ENCODE measurements at regions of chr1 and their contacts with region 1.

Region 1: DNA sequence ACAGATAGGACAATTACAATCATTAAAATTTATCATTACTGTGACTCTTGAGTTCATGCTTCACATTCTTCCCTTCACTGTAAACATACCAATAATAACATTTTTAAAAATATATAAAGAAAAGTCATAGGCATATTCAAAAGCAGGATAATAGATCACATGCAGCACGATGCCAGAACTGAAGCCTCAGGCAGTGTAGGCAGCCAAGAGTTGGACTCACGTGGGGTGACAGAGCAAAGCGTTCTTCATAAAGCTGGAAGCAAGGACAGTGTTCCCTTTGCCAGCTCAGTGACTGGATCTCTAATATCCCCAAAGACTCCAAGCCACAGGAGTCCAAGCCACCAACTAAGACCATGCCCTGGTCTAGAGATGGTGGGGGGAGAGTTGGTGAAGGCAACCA is 77.7 kb downstream of the ODF2L start:
- DNase-seq: no peak
- H3K4me3 ChIP-seq: no peak overlapping the region
- H3K27ac ChIP-seq: no peak overlapping the region
- H3K4me1 ChIP-seq: no peaks in the 10 kb centered on the region
- H3K27me3 ChIP-seq: no peaks in the 10 kb centered on the region
- CTCF ChIP-seq: no peak
- POLR2A ChIP-seq: no peak

Region 2: GRCh38 chr1:85276215-85276977 is 1042.0 kb before region 1 on chr1 and contains the start of gene BCL10:
- intact Hi-C with region 1: no loop called
- DNase-seq: peak; percentile 98
- H3K4me3 ChIP-seq: peak within 1 kb of the TSS; percentile 86 to 90 (median 88)
- H3K27ac ChIP-seq: peak within 1 kb of the TSS; percentile 97
- H3K4me1 ChIP-seq: peaks cover 0 to 9% of the 10 kb centered on the region in 2 donors
- H3K27me3 ChIP-seq: no peaks in the 10 kb centered on the region
- CTCF ChIP-seq: no peak
- POLR2A ChIP-seq: peak; percentile 76
- total RNA-seq, gene BCL10: 16.5 to 23.6 (median 17.7) TPM

Region 3: DNA sequence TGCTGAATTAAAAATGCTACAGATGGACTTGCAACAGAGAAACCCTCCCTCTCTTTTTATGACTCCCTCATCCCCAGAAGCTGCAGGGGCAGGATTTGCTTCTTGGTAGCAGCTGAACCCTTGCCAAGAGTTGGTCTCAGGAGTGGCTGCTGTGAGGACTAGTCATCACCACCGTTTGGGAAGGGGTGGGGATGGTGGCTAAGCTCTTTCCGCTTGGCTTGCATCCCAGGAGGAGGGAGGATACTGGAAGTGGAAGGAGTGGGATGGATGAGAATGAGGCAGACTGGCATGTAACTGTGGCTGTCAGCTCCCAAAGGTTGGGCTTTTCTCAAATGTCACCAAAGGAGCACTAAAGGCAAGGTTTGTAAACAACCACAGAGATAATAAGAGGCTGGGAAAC is 111.1 kb before region 1 on chr1:
- intact Hi-C with region 1: no loop called
- DNase-seq: no peak
- H3K4me3 ChIP-seq: no peak overlapping the region
- H3K27ac ChIP-seq: no peak overlapping the region
- H3K4me1 ChIP-seq: no peaks in the 10 kb centered on the region
- H3K27me3 ChIP-seq: no peaks in the 10 kb centered on the region
- CTCF ChIP-seq: no peak
- POLR2A ChIP-seq: no peak

Region 4: DNA sequence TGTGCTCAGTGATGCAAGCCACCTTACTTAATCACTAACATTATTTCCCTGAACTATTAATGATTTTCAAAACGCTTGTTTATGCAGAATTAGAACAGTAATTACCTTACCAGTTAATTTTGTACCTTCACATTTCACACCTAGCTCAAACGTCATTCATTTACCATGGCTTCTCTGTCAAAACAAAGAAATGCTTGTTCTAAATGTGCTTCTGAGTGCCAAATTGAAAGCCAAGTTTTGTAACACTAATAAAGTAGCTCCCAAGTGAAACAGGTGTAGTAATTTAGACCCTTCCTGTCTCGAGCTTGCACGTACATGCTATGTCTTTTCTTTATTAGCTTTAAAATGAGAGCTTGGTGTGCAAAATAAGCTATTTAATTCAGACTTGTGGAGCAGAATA is 1831.9 kb after region 1 on chr1:
- intact Hi-C with region 1: loop called (anchors 5 kb)
- DNase-seq: no peak
- H3K4me3 ChIP-seq: no peak overlapping the region
- H3K27ac ChIP-seq: no peak overlapping the region
- H3K4me1 ChIP-seq: no peaks in the 10 kb centered on the region
- H3K27me3 ChIP-seq: no peaks in the 10 kb centered on the region
- CTCF ChIP-seq: no peak
- POLR2A ChIP-seq: no peak

Measured in breast epithelium (tissue), 4 donors.